ENCODE measurements at regions of chr12 and their contacts with region 1.

Region 1: GRCh38 chr12:130281153-130281799 is 56.4 kb upstream of the PIWIL1 start:
- DNase-seq: no peak
- H3K4me3 ChIP-seq: no peak overlapping the region
- CTCF ChIP-seq: peak in 1 of 3 donors; percentile 27
- POLR2A ChIP-seq: no peak

Region 2: GRCh38 chr12:130335517-130336392 is 54.5 kb after region 1 on chr12:
- intact Hi-C with region 1: loop called (anchors 5 kb)
- DNase-seq: peak in 1 of 2 donors; percentile 59
- H3K4me3 ChIP-seq: no peak overlapping the region
- CTCF ChIP-seq: no peak
- POLR2A ChIP-seq: no peak

Region 3: GRCh38 chr12:130375296-130376287 is 94.3 kb after region 1 on chr12:
- intact Hi-C with region 1: no loop called
- DNase-seq: no peak
- H3K4me3 ChIP-seq: no peak overlapping the region
- CTCF ChIP-seq: no peak
- POLR2A ChIP-seq: no peak

Region 4: DNA sequence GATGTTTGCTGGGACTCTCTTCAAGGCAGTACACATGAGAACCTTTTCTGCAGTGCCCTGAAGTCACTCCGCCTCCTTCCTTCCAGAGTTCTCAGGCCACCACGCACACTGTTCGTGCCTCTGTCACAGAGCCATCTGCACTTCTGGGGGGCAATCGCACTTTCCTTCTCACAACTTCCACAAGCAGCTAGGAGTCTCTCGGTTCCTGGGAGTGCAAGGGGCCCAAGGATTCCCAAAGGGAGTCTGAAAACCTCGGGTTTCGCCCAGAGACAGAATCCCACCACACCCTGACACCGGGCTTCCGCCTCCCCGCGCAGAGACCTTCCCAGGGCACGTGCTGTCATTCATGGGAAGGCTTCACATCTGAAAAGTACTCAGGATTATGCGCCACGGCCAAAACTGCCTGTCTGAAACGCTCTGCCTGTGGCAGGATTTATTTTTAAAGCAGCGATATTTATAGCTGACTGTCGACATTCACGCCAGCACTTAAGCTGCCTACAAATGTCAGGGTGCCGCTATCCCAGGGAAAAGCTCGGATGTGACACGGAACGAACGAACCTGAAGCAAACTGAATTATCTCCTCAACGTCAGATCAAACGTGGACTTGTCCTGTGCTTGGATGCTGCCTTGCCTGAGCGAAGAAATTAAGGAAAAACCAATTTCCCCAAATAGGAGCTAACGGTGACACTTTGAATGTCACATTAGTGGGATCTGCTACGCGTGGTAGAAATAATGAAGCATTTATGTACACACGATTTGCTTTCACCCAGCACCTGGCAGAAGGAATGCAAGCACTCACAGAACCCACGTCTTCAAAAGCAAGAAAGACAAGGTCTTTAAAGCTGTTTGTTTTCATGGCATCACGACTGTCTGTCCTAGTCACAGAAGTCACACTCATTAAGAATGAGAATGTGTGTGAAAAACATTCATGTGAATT is 210.4 kb after region 1 on chr12:
- intact Hi-C with region 1: no loop called
- DNase-seq: no peak
- H3K4me3 ChIP-seq: no peak overlapping the region
- CTCF ChIP-seq: no peak
- POLR2A ChIP-seq: no peak